ENCODE measurements at regions of chr17 and their contacts with region 1.

Region 1: DNA sequence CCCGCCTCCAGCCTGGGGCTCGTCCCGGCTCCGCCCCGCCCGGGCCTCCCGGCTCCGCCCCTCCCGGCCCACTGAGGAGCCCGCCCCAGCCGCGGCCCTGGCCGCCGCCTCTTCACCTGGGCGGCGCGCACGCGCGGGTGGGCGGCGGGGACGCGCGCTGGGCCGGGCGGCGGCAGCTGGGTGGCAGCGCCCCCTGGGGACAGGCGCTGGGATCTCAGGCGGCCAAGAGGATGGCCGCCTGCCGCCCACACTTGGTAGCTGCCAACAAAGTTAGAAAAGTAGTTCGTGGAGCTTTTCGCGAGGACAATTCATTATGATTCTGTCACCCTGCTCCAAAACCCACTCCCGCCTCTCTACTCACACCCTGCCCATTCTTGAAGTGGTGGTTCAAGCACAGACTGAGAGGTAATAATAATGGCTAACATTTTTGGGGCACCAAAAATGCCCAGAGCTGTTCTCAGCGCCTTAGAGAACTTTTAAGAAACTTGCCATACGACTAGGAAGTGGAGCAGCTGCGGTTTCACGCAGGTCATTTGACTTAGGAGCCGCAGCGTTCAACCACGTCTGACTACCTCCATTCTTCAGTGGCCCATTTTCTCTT is 340 bp upstream of the MYO1D start:
- DNase-seq: peak; percentile 97
- ATAC-seq: peak; percentile 94
- H3K4me3 Mint-ChIP-seq: peak overlapping the region; percentile 84
- H3K27ac Mint-ChIP-seq: peak overlapping the region; percentile 93
- H3K4me1 Mint-ChIP-seq: peaks cover 13% of the 10 kb centered on the region
- H3K27me3 Mint-ChIP-seq: no peaks in the 10 kb centered on the region
- CTCF ChIP-seq: no peak

Region 2: GRCh38 chr17:32783602-32784001 is 93.7 kb before region 1 on chr17:
- CTCF ChIA-PET with region 1: interaction called, 128 read pairs
- POLR2A ChIA-PET with region 1: interaction called, 7 read pairs
- intact Hi-C with region 1: loop called (anchors 1 kb)
- DNase-seq: no peak
- ATAC-seq: peak; percentile 50
- H3K4me3 Mint-ChIP-seq: no peak overlapping the region
- H3K27ac Mint-ChIP-seq: no peak overlapping the region
- H3K4me1 Mint-ChIP-seq: peaks cover 3% of the 10 kb centered on the region
- H3K27me3 Mint-ChIP-seq: no peaks in the 10 kb centered on the region
- CTCF ChIP-seq: no peak

Region 3: DNA sequence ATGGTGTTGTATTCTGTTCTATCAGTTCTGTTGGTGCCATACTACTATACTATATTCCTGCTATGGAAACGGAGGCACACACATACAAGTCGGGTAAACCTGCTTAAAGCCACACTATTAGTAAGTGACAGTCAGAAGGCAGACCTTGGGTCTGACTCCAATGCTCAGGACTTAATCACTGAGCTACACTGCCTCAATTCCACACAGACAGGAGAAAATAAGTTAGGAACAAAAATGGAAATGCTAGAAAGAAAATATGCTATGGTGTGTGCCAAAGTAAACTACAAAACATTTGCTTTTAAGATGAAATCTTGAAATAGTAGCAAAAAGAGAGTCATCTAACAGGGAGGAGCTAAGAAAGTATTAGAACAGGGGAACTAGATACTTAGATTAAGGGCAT is 48.4 kb before region 1 on chr17:
- CTCF ChIA-PET with region 1: interaction called, 40 read pairs
- POLR2A ChIA-PET with region 1: interaction called, 48 read pairs
- intact Hi-C with region 1: loop called (anchors 1 kb)
- DNase-seq: no peak
- ATAC-seq: peak; percentile 18
- H3K4me3 Mint-ChIP-seq: peak overlapping the region; percentile 68
- H3K27ac Mint-ChIP-seq: peak overlapping the region; percentile 82
- H3K4me1 Mint-ChIP-seq: peaks cover 63% of the 10 kb centered on the region
- H3K27me3 Mint-ChIP-seq: no peaks in the 10 kb centered on the region
- CTCF ChIP-seq: no peak

Region 4: DNA sequence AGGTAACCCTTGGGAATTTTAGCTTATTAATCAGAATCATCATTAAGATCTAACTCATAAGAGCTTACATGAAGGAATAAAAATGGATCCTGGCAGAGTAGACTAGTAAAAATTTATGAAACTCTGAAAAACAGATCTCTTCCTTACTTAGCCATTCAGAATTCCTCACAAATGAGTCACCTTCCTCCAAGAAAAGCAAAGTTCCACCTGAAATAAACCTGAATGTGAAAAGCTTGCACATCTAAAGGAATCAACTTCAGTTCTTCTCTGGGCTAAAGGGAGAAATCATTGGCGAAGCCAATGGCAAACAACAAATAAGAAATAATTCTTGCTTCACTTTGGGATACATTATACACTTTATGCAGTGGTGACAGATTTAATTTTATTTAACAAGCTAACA is 23.1 kb before region 1 on chr17:
- CTCF ChIA-PET with region 1: interaction called, 11 read pairs
- POLR2A ChIA-PET with region 1: no interaction called
- intact Hi-C with region 1: no loop called
- DNase-seq: no peak
- ATAC-seq: no peak
- H3K4me3 Mint-ChIP-seq: no peak overlapping the region
- H3K27ac Mint-ChIP-seq: no peak overlapping the region
- H3K4me1 Mint-ChIP-seq: no peaks in the 10 kb centered on the region
- H3K27me3 Mint-ChIP-seq: no peaks in the 10 kb centered on the region
- CTCF ChIP-seq: no peak

Region 5: DNA sequence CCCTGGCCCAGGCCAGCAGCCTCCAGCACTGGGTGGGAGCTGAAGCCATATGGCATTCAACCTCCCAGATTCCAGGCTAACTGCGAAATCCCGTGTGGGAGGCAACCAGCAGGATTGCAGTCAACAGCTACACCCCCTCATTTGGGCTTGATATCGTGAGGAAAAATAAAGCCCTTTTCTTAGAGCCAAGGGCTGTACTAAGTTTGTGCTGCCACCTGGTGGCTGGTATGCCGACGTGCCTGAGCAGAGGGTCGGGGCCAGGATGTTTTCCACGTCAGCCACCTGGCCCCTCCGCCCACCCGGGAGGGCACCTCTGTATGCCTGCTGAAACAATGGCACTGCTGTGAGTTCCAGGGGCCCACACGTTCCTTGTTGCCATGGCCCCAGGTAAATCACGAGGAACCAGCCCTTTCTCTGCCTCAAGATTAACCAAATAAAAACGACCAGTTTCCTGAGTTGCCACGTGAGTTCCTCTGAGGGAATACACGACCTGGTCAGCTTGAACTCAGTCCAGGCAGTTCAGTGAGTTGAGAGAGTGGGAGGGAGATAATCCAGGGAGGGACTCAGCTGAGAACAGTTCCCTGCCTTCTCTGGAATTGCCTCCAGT is 59.7 kb after region 1 on chr17:
- CTCF ChIA-PET with region 1: interaction called, 19 read pairs
- POLR2A ChIA-PET with region 1: no interaction called
- intact Hi-C with region 1: no loop called
- DNase-seq: peak; percentile 35
- ATAC-seq: peak; percentile 34
- H3K4me3 Mint-ChIP-seq: peak overlapping the region; percentile 28
- H3K27ac Mint-ChIP-seq: no peak overlapping the region
- H3K4me1 Mint-ChIP-seq: peaks cover 3% of the 10 kb centered on the region
- H3K27me3 Mint-ChIP-seq: peaks cover 26% of the 10 kb centered on the region
- CTCF ChIP-seq: peak; percentile 36

Measured in activated B cell treated with CpG ODN at 0.5 μM for 24 hours (primary cell).